Activated B cell treated with CpG ODN at 0.5 μM for 24 hours (primary cell): ENCODE measurements at regions of chr1 and their contacts with region 1.

Region 1: DNA sequence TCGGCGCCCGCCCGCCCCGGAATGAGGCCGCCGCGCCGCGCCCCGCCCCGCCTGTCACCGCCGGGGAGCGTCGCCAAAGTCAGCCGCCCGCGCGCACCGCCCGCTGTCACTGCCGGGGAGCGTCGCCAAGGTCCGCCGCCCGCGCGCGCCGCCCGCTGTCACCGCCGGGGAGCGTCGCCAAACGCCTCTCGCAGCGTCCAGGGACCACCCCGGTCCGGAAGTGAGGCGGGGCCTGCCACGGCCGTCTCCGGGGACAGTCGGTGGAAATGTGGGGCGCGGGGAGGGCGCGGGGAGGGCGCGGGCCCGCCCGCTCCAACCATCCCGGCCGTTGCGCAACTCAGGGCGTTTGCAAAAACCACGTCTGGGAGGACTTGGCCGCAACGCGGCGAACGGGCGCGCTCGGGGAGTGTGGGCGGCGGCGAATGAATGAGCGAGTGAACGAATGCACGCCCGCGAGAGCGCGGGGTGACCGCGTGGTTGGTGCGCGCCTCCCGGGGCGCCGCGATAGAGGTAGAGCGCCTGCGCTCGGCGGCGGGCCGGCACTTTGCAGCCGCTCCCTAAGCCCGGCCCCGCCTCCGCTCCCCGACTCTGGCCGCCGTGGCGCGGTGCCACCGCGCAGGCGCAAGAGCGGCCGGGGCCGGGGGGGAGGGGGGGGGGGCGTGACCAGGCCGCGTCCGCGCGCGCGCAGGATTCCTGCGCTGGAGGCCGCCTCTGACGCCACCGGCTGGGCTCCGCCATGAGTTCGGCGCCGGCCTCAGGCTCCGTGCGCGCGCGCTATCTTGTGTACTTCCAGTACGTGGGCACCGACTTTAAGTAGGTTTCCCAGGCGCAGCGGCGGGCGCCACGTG is at the starts of genes ACAP3 and PUSL1:
- DNase-seq: peak; percentile 88
- ATAC-seq: peak; percentile 68
- H3K4me3 Mint-ChIP-seq: peak within 1 kb of the TSS; percentile 86
- H3K27ac Mint-ChIP-seq: peak within 1 kb of the TSS; percentile 87
- H3K4me1 Mint-ChIP-seq: peaks cover 38% of the 10 kb centered on the region
- H3K27me3 Mint-ChIP-seq: no peaks in the 10 kb centered on the region
- CTCF ChIP-seq: no peak
- total RNA-seq, gene ACAP3: 16.2 and 26.1 TPM in 2 replicates
- total RNA-seq, gene PUSL1: 11.9 and 12.6 TPM in 2 replicates

Region 2: DNA sequence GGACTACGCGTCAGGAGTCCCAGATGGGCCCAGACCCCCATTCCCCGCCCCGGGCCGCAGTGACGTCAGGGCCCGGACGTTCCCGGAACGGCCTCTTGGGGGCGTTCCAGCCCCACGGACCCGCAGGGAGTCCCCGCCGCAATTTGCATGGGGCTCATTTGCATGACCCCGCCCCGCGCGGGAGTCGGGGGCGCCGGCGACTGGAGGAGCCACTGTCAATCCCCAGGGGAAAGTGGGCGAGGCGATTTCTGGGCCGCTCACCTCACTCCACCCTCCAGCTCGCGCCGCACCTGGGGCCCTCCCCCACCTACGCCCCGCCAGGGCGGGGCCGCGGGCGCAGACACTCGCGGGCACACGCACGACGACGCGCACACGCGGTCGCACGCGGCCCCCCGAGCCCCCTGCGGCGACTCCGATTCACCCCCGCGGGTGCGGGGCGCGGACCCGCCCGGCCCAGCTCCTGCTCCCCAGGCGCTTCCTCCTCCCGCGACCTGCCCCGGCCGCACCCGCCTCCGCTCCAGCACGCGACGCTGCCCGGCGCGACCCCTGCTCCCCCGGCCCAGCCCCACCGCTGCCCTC is 275.0 kb before region 1 on chr1:
- CTCF ChIA-PET with region 1: no interaction called
- POLR2A ChIA-PET with region 1: no interaction called
- intact Hi-C with region 1: loop called (anchors 5 kb)
- DNase-seq: peak; percentile 97
- ATAC-seq: peak; percentile 96
- H3K4me3 Mint-ChIP-seq: peak overlapping the region; percentile 72
- H3K27ac Mint-ChIP-seq: peak overlapping the region; percentile 24
- H3K4me1 Mint-ChIP-seq: peaks cover 19% of the 10 kb centered on the region
- H3K27me3 Mint-ChIP-seq: no peaks in the 10 kb centered on the region
- CTCF ChIP-seq: peak; percentile 67

Region 3: GRCh38 chr1:1115786-1116700 is 192.1 kb before region 1 on chr1 and contains the start of gene C1orf159:
- CTCF ChIA-PET with region 1: no interaction called
- POLR2A ChIA-PET with region 1: no interaction called
- intact Hi-C with region 1: loop called (anchors 1 kb)
- DNase-seq: peak; percentile 99
- ATAC-seq: peak; percentile 92
- H3K4me3 Mint-ChIP-seq: peak within 1 kb of the TSS; percentile 88
- H3K27ac Mint-ChIP-seq: peak within 1 kb of the TSS; percentile 80
- H3K4me1 Mint-ChIP-seq: peaks cover 9% of the 10 kb centered on the region
- H3K27me3 Mint-ChIP-seq: peaks cover 5% of the 10 kb centered on the region
- CTCF ChIP-seq: no peak
- total RNA-seq, gene C1orf159: 20.8 and 26.5 TPM in 2 replicates

Region 4: GRCh38 chr1:1273512-1274298 is 34.4 kb before region 1 on chr1 and contains the start of gene UBE2J2:
- CTCF ChIA-PET with region 1: no interaction called
- POLR2A ChIA-PET with region 1: no interaction called
- intact Hi-C with region 1: loop called (anchors 5 kb)
- DNase-seq: peak; percentile 82
- ATAC-seq: peak; percentile 96
- H3K4me3 Mint-ChIP-seq: peak within 1 kb of the TSS; percentile 87
- H3K27ac Mint-ChIP-seq: peak within 1 kb of the TSS; percentile 70
- H3K4me1 Mint-ChIP-seq: peaks cover 38% of the 10 kb centered on the region
- H3K27me3 Mint-ChIP-seq: no peaks in the 10 kb centered on the region
- CTCF ChIP-seq: no peak
- total RNA-seq, gene UBE2J2: 79.2 and 89.9 TPM in 2 replicates

Region 5: DNA sequence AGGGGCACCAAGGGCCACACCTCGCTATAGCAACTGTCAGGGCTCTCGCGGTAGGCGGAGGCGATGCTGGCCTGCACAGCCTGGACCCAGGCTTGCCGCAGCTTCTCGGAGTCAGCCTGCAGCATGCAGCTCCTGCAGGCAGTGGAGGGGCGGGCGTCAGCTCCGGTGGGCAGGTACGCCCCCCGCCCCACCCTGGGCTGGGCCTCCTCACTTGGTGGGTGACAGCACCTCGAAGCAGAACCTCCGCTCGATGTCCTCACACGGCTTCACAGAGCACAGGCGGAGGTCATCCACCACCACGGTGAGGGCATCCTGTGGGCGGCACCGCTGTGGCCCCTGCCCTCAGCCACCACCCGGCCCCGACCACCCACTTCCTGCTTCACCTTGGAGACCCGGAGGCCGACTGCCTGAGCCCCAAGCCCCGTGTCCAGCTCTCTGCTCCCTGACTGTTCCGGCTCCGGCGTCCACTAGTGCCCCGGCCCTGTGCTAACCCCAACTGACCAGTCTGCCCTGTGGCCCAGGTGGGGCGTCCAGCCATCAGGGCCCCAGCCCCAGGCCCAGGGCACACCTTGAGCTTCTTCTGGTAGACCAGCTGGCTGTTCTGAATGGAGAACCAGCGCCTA is 10.2 kb before region 1 on chr1:
- CTCF ChIA-PET with region 1: no interaction called
- POLR2A ChIA-PET with region 1: no interaction called
- intact Hi-C with region 1: no loop called
- DNase-seq: no peak
- ATAC-seq: no peak
- H3K4me3 Mint-ChIP-seq: no peak overlapping the region
- H3K27ac Mint-ChIP-seq: no peak overlapping the region
- H3K4me1 Mint-ChIP-seq: no peaks in the 10 kb centered on the region
- H3K27me3 Mint-ChIP-seq: no peaks in the 10 kb centered on the region
- CTCF ChIP-seq: no peak

Region 6: DNA sequence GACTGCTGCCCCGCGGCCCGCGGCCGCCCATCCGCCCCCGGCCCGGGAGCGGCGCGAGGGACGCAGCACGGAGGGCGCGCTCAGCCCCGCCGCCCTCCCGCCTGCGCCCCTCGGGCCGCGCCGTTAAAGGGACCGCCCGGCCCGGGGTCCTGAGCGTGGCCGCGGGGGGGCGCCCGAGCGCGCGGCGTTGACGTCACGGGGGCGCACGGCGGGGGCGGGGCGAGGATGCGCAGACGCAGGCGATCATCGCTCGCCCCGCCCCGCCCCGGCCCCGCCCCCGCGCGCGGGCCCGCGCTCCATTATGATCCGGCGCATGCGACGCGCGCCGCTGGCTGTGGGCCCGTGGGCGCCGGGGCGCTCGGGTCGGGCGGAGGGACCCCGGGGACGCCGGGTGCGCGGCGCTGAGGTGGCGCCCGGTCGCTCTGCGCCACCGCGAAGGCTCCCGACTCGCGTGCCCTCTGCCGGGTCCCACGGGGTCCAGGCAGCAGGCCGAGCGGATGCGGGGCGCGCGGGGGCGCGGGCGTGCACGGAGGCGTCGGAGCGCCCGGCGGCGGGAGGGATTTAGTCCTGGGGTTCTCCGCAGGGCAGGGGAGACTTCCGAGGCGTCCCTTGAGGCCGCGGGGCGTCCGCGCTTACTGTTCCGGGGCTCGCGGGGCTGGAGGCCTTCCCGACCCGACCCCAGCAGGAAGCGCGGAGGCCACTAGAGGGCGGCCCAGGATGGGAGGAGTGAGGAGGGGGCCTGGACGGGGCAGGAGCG is 41.3 kb after region 1 on chr1 and contains the start of gene DVL1:
- CTCF ChIA-PET with region 1: no interaction called
- POLR2A ChIA-PET with region 1: no interaction called
- intact Hi-C with region 1: loop called (anchors 1 kb)
- DNase-seq: peak; percentile 75
- ATAC-seq: peak; percentile 84
- H3K4me3 Mint-ChIP-seq: peak within 1 kb of the TSS; percentile 77
- H3K27ac Mint-ChIP-seq: no peak within 1 kb of the TSS
- H3K4me1 Mint-ChIP-seq: peaks cover 30% of the 10 kb centered on the region
- H3K27me3 Mint-ChIP-seq: peaks cover 12% of the 10 kb centered on the region
- CTCF ChIP-seq: no peak
- total RNA-seq, gene DVL1: 29.3 and 30.7 TPM in 2 replicates

Region 7: DNA sequence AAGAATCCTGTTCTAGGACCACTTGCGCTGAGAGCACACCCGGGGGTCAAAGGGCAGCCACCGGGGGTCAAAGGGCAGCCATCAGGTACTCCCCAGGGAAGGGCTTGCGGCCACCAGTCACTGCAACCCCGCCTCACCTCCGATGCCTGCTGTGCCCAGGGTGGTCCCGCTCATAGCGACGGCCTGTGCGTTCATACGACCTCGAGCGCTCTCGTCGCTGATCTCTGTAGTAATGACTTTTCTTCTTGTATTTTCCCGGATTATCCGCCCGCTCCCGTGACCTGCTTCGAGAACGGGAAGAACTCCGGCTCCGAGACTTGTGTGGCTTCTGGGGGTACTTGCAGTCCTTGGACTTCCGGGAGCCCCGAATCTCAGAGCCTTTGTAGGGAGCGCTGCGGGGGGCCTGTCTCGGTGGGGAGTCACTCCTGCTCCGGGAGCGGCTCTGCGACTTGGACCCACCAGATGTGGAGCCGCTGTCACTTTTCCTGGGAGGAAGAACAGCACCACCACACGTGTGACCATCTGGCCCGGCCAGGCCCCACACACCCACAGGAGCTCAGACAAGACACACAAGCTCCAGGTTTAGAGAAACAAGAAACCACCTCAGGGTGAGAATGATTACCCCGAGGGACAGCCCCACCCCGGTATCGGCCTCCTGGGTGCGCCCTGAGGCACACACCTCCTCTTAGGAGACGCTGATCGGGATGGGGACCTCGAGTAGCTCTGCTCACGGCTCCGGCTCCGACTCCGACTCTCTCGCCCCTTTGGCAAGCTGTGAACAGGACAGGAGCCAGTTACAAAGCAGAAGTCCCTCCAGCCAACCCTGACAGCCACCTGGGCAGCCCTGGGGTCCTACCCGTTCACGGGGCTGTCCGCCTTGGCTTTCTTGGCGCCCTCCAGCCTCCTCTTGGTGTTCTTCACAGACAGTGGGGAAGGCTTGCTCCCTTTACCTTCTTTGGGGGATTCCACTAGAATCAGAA is 79.3 kb after region 1 on chr1:
- CTCF ChIA-PET with region 1: no interaction called
- POLR2A ChIA-PET with region 1: no interaction called
- intact Hi-C with region 1: no loop called
- DNase-seq: no peak
- ATAC-seq: no peak
- H3K4me3 Mint-ChIP-seq: no peak overlapping the region
- H3K27ac Mint-ChIP-seq: no peak overlapping the region
- H3K4me1 Mint-ChIP-seq: peaks cover under 1% of the 10 kb centered on the region
- H3K27me3 Mint-ChIP-seq: no peaks in the 10 kb centered on the region
- CTCF ChIP-seq: no peak

Region 8: GRCh38 chr1:1890506-1891348 is 582.6 kb after region 1 on chr1 and contains the start of gene GNB1:
- CTCF ChIA-PET with region 1: no interaction called
- POLR2A ChIA-PET with region 1: no interaction called
- intact Hi-C with region 1: loop called (anchors 10 kb)
- DNase-seq: peak; percentile 96
- ATAC-seq: peak; percentile 59
- H3K4me3 Mint-ChIP-seq: peak within 1 kb of the TSS; percentile 86
- H3K27ac Mint-ChIP-seq: peak within 1 kb of the TSS; percentile 95
- H3K4me1 Mint-ChIP-seq: peaks cover 66% of the 10 kb centered on the region
- H3K27me3 Mint-ChIP-seq: no peaks in the 10 kb centered on the region
- CTCF ChIP-seq: no peak
- total RNA-seq, gene GNB1: 266 and 302 TPM in 2 replicates